ENCODE measurements at regions of chr11 and their contacts with region 1.

Region 1: GRCh38 chr11:61361686-61362541 is at the starts of genes CYB561A3 and TMEM138:
- DNase-seq: peak; percentile 74 to 90 (median 82)
- ATAC-seq: peak; percentile 89 to 93 (median 92)
- H3K4me3 ChIP-seq: peak within 1 kb of the TSS; percentile 89 to 93
- H3K4me3 Mint-ChIP-seq: peak within 1 kb of the TSS; percentile 99 to 100 (median 100)
- H3K27ac ChIP-seq: peak within 1 kb of the TSS; percentile 96
- H3K27ac Mint-ChIP-seq: peak within 1 kb of the TSS; percentile 98 to 100
- H3K4me1 ChIP-seq: peaks cover 10 to 38% of the 10 kb centered on the region in 2 experiments
- H3K4me1 Mint-ChIP-seq: peaks cover 33 to 53% (median 46%) of the 10 kb centered on the region in 3 donors
- H3K27me3 ChIP-seq: no peaks in the 10 kb centered on the region
- H3K27me3 Mint-ChIP-seq: no peaks in the 10 kb centered on the region
- total RNA-seq, gene CYB561A3: 34.8 to 49.1 (median 47.3) TPM
- total RNA-seq, gene TMEM138: 48.7 to 57.7 (median 56.6) TPM

Region 2: GRCh38 chr11:60887556-60887955 is 474.4 kb before region 1 on chr11:
- CTCF ChIA-PET with region 1: no interaction called
- POLR2A ChIA-PET with region 1: no interaction called
- DNase-seq: peak in 14 of 35 experiments; percentile 17 to 54 (median 28)
- ATAC-seq: peak; percentile 81 to 87 (median 82)
- H3K4me3 ChIP-seq: no peak overlapping the region
- H3K4me3 Mint-ChIP-seq: no peak overlapping the region
- H3K27ac ChIP-seq: no peak overlapping the region
- H3K27ac Mint-ChIP-seq: no peak overlapping the region
- H3K4me1 ChIP-seq: no peaks in the 10 kb centered on the region
- H3K4me1 Mint-ChIP-seq: peaks cover 0 to 11% (median 11%) of the 10 kb centered on the region in 3 donors
- H3K27me3 ChIP-seq: no peaks in the 10 kb centered on the region
- H3K27me3 Mint-ChIP-seq: no peaks in the 10 kb centered on the region

Region 3: DNA sequence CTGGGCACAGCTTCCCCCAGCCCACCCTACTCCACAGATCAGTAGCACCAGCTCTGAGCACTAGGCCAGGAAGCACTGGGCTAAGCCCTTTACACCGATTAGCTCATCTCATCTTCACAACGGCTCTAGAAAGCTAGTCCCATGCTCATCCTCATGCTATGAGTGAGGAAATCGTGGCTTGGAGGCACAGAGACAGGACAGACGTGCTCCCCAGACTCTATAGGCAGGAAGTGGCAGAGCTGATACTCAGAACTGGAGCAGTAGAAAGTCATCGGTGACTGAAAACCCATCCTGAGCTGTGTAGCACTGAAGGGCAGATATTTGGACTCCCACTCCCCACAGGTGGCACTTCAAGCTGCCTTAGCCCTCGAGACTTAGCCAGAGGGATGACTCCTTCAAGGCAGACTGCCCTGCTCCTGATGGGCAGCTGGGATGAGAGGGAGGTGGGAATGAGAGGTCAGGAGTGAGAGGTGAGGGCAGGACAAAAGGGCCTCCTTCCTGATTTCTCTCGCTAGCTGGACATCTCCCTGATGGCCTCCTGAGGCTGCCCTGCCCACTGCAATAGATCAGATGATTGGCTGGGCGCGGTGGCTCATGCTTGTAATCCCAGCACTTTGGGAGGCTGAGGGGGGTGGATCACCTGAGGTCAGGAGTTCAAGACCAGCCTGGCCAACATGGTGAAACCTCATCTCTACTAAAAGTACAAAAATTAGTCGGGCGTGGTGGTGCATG is 250.0 kb before region 1 on chr11:
- CTCF ChIA-PET with region 1: no interaction called
- POLR2A ChIA-PET with region 1: no interaction called
- DNase-seq: peak in 32 of 35 experiments; percentile 41 to 77 (median 58)
- ATAC-seq: peak; percentile 80 to 89 (median 84)
- H3K4me3 ChIP-seq: peak overlapping the region; percentile 4 to 15
- H3K4me3 Mint-ChIP-seq: peak overlapping the region in 2 of 3 donors; percentile 57 to 73
- H3K27ac ChIP-seq: peak overlapping the region; percentile 86
- H3K27ac Mint-ChIP-seq: peak overlapping the region in 1 of 2 donors; percentile 82
- H3K4me1 ChIP-seq: peaks cover 78 to 95% of the 10 kb centered on the region in 2 experiments
- H3K4me1 Mint-ChIP-seq: peaks cover 94 to 98% (median 97%) of the 10 kb centered on the region in 3 donors
- H3K27me3 ChIP-seq: no peaks in the 10 kb centered on the region
- H3K27me3 Mint-ChIP-seq: no peaks in the 10 kb centered on the region

Region 4: DNA sequence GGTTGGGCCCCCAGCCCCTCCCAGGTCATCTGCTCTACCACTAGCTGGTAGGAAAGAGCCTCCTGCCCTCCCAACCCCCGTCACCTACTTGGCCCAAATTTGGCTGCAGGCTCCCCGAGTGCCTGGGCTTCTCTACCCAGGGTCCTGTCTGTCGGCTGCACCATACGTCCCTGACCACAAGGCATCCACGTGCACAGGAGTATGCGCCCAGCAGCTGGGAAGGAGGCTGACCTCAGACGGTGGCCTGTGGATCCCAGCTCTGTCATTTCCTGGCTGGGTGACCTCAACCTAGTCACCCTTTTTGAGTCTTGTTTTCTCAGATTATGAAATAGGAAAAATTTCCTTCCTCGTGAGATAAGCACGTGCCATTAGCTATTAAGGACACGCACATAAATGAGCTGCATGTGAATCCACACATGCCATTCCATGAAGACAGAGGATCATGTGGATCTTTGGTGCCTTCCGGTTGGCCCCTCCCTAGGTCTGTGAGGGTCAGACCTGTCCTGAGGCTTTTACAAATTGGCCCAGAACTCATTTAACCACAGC is 13.9 kb before region 1 on chr11:
- CTCF ChIA-PET with region 1: no interaction called
- POLR2A ChIA-PET with region 1: no interaction called
- DNase-seq: no peak
- ATAC-seq: no peak
- H3K4me3 ChIP-seq: no peak overlapping the region
- H3K4me3 Mint-ChIP-seq: no peak overlapping the region
- H3K27ac ChIP-seq: no peak overlapping the region
- H3K27ac Mint-ChIP-seq: no peak overlapping the region
- H3K4me1 ChIP-seq: no peaks in the 10 kb centered on the region
- H3K4me1 Mint-ChIP-seq: peaks cover 0 to 2% (median 0%) of the 10 kb centered on the region in 3 donors
- H3K27me3 ChIP-seq: no peaks in the 10 kb centered on the region
- H3K27me3 Mint-ChIP-seq: no peaks in the 10 kb centered on the region

Region 5: GRCh38 chr11:61384271-61385242 is 22.6 kb after region 1 on chr11:
- CTCF ChIA-PET with region 1: interaction called, 3 to 19 read pairs
- POLR2A ChIA-PET with region 1: no interaction called
- DNase-seq: no peak
- ATAC-seq: no peak
- H3K4me3 ChIP-seq: no peak overlapping the region
- H3K4me3 Mint-ChIP-seq: no peak overlapping the region
- H3K27ac ChIP-seq: no peak overlapping the region
- H3K27ac Mint-ChIP-seq: no peak overlapping the region
- H3K4me1 ChIP-seq: peaks cover 0 to 6% of the 10 kb centered on the region in 2 experiments
- H3K4me1 Mint-ChIP-seq: peaks cover 7 to 9% (median 8%) of the 10 kb centered on the region in 3 donors
- H3K27me3 ChIP-seq: no peaks in the 10 kb centered on the region
- H3K27me3 Mint-ChIP-seq: no peaks in the 10 kb centered on the region

Region 6: GRCh38 chr11:61769169-61769920 is 407.4 kb after region 1 on chr11:
- CTCF ChIA-PET with region 1: no interaction called
- POLR2A ChIA-PET with region 1: no interaction called
- DNase-seq: no peak
- ATAC-seq: no peak
- H3K4me3 ChIP-seq: no peak overlapping the region
- H3K4me3 Mint-ChIP-seq: no peak overlapping the region
- H3K27ac ChIP-seq: no peak overlapping the region
- H3K27ac Mint-ChIP-seq: no peak overlapping the region
- H3K4me1 ChIP-seq: peaks cover 0 to 19% of the 10 kb centered on the region in 2 experiments
- H3K4me1 Mint-ChIP-seq: peaks cover 0 to 11% (median 5%) of the 10 kb centered on the region in 3 donors
- H3K27me3 ChIP-seq: no peaks in the 10 kb centered on the region
- H3K27me3 Mint-ChIP-seq: no peaks in the 10 kb centered on the region